CD8-positive, alpha-beta memory T cell (primary cell): ENCODE measurements at regions of chr16 and their contacts with region 1.

Region 1: DNA sequence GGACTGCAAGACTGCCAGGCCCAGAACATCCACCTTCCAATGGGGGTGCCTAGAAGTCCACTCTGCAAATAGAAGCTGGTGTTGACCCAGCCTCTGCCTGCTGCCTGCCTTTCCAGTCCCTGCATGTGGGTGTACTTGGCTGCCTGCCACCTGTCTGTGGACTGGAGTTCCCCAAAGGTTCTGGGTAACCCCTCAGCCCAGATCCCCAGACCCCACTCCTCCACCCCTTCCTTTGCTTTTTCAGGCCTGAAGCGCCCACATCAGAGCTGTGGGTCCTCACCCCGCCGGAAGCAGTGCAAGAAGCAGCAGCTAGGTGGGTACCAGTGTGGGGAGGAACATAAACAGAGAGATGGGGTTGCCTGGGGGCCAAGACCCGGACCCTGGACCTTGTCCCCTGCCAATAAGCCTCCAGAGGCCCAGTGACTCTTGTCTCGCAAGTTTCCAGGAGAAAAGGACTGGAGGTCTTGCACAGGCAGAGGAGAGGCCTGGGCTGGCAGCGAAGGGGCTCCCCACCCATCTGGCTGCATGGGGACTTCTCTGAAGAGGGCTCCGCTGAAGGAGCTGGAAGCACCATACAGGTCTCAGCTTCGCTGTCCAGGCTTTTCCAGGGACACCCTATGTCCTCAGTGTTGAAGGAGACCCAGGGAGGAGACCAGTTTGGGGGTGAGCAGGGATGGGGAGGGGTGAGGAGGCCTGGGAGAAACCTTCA is 34.3 kb downstream of the NLRC5 start:
- DNase-seq: peak; percentile 57 to 91 (median 86)
- H3K4me3 ChIP-seq: peak overlapping the region; percentile 36
- H3K4me3 Mint-ChIP-seq: peak overlapping the region; percentile 60 to 89 (median 76)
- H3K27ac ChIP-seq: no peak overlapping the region
- H3K27ac Mint-ChIP-seq: peak overlapping the region; percentile 79 to 94 (median 92)
- H3K4me1 ChIP-seq: peaks cover 87% of the 10 kb centered on the region
- H3K4me1 Mint-ChIP-seq: peaks cover 87 to 95% (median 94%) of the 10 kb centered on the region in 3 donors
- H3K27me3 ChIP-seq: no peaks in the 10 kb centered on the region
- H3K27me3 Mint-ChIP-seq: peaks cover 0 to 1% of the 10 kb centered on the region in 2 donors

Region 2: GRCh38 chr16:57039148-57039812 is 15.6 kb after region 1 on chr16:
- CTCF ChIA-PET with region 1: interaction called, 20 read pairs
- POLR2A ChIA-PET with region 1: interaction called, 24 read pairs
- DNase-seq: peak in 4 of 5 donors; percentile 24 to 67 (median 54)
- H3K4me3 ChIP-seq: no peak overlapping the region
- H3K4me3 Mint-ChIP-seq: peak overlapping the region; percentile 42 to 86 (median 71)
- H3K27ac ChIP-seq: no peak overlapping the region
- H3K27ac Mint-ChIP-seq: peak overlapping the region; percentile 81 to 99 (median 91)
- H3K4me1 ChIP-seq: peaks cover 96% of the 10 kb centered on the region
- H3K4me1 Mint-ChIP-seq: peaks cover 88 to 99% (median 95%) of the 10 kb centered on the region in 3 donors
- H3K27me3 ChIP-seq: no peaks in the 10 kb centered on the region
- H3K27me3 Mint-ChIP-seq: peaks cover 0 to 1% of the 10 kb centered on the region in 2 donors

Region 3: DNA sequence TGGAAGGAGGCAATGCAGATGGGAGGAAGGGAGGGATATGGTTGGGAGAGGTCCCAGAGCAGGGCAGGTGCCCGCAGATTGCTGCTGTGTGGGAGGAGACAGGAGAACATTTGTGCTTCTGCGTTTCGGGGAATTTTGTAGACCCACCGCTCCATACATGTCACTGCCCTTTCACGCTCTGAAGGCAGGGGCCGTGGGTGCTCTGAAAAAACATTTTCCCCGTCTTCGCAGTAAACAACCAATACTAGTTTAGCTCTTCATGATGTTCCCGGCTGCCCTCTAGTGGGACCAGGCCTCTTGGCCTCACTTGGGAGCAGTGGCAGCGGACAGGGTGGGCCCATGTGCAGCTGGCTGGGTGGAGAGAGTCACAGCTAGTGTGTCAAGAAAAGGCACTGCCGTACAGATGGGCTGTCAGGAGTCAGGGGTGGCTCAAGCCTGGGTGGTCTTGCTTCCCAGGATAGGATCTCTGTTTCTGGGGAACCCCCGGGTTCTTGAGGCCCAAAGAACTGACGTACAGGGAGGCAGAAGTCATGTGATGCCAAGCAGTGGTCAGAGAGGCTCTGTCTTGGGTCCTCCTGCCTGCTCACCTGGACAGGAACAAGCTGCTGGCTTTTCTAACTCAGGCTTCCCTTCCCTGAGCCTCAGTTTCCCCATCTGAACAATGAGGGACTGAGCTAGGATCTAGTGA is 22.1 kb after region 1 on chr16:
- CTCF ChIA-PET with region 1: interaction called, 20 read pairs
- POLR2A ChIA-PET with region 1: interaction called, 24 read pairs
- DNase-seq: peak in 3 of 5 donors; percentile 38 to 76 (median 48)
- H3K4me3 ChIP-seq: no peak overlapping the region
- H3K4me3 Mint-ChIP-seq: peak overlapping the region in 4 of 7 donors; percentile 15 to 54 (median 16)
- H3K27ac ChIP-seq: no peak overlapping the region
- H3K27ac Mint-ChIP-seq: peak overlapping the region; percentile 85 to 96 (median 90)
- H3K4me1 ChIP-seq: peaks cover 49% of the 10 kb centered on the region
- H3K4me1 Mint-ChIP-seq: peaks cover 41 to 67% (median 44%) of the 10 kb centered on the region in 3 donors
- H3K27me3 ChIP-seq: no peaks in the 10 kb centered on the region
- H3K27me3 Mint-ChIP-seq: peaks cover 0 to 1% of the 10 kb centered on the region in 2 donors